PC-9 (cell line): ENCODE measurements at regions of chr17 and their contacts with region 1.

Region 1: DNA sequence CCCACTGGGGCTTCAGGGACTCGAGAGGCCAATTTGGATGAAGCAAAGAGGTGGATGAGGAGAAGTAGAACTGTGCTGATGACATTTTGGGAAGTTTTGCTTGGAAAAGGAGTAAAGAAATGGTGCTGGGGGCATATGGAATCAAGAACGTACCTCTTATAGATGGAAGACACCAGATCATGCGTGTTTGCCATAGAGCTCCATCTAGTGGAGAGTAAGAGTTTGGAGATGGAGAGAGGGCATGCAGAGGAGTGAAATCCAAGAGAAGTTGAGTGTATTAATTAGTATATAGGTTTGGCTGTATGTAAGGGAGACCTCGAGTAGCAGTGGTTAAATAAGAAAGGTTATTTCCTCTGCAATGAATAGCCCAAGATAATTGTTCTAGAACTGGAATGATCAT is 56.0 kb downstream of the SHISA6 start:
- DNase-seq: no peak
- H3K4me3 ChIP-seq: no peak overlapping the region
- H3K27ac ChIP-seq: no peak overlapping the region
- H3K4me1 ChIP-seq: no peaks in the 10 kb centered on the region
- H3K27me3 ChIP-seq: peaks cover 17% of the 10 kb centered on the region
- CTCF ChIP-seq: peak; percentile 44

Region 2: DNA sequence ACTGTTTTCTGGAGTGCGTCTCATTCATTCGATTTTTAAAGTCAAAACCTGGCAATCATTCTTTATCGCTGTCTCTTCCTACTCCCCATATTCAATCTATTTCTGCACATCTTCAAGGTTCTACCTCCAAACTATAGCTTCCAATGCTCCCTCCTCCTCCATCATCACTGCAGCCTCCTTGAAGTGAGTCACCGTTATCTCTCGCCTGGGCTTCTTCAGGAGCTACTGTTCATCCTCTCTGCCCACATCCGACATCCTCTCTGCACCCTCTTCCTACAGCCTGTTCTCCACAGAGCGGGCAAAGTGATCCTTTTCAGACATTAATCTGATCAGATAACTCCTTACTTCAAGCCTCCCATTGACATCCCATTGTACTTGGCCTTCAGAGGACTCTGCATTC is 157.1 kb after region 1 on chr17:
- CTCF ChIA-PET with region 1: no interaction called
- POLR2A ChIA-PET with region 1: no interaction called
- intact Hi-C with region 1: loop called (anchors 5 kb)
- DNase-seq: no peak
- H3K4me3 ChIP-seq: no peak overlapping the region
- H3K27ac ChIP-seq: no peak overlapping the region
- H3K4me1 ChIP-seq: no peaks in the 10 kb centered on the region
- H3K27me3 ChIP-seq: peaks cover under 1% of the 10 kb centered on the region; the same call in 1 of the 2 replicates
- CTCF ChIP-seq: no peak